ENCODE measurements at regions of chr6 and their contacts with region 1.

Region 1: GRCh38 chr6:168035098-168035660 is 37.7 kb downstream of the KIF25 start:
- DNase-seq: peak; percentile 72 to 85 (median 83)
- ATAC-seq: peak; percentile 48 to 74 (median 69)
- H3K4me3 ChIP-seq: peak overlapping the region in 11 of 12 donors; percentile 9 to 62 (median 48)
- H3K27ac ChIP-seq: peak overlapping the region; percentile 58 to 97 (median 86)
- H3K4me1 ChIP-seq: peaks cover 5 to 71% (median 52%) of the 10 kb centered on the region in 12 donors
- H3K27me3 ChIP-seq: peaks cover 0 to 8% (median 0%) of the 10 kb centered on the region in 9 donors
- CTCF ChIP-seq: no peak
- POLR2A ChIP-seq: no peak

Region 2: GRCh38 chr6:167932468-167933276 is 102.5 kb before region 1 on chr6:
- intact Hi-C with region 1: loop called in 5 of 10 experiments (anchors 2 to 10 kb)
- DNase-seq: no peak
- ATAC-seq: no peak
- H3K4me3 ChIP-seq: no peak overlapping the region
- H3K27ac ChIP-seq: peak overlapping the region in 8 of 12 donors; percentile 61 to 82 (median 78)
- H3K4me1 ChIP-seq: peaks cover 0 to 27% (median 15%) of the 10 kb centered on the region in 12 donors
- H3K27me3 ChIP-seq: no peaks in the 10 kb centered on the region
- CTCF ChIP-seq: no peak
- POLR2A ChIP-seq: no peak

Region 3: GRCh38 chr6:167968091-167968490 is 67.1 kb before region 1 on chr6:
- intact Hi-C with region 1: loop called in 2 of 10 experiments (anchors 2 to 5 kb)
- DNase-seq: no peak
- ATAC-seq: no peak
- H3K4me3 ChIP-seq: no peak overlapping the region
- H3K27ac ChIP-seq: peak overlapping the region in 3 of 12 donors; percentile 74 to 82 (median 80)
- H3K4me1 ChIP-seq: peaks cover 0 to 39% (median 7%) of the 10 kb centered on the region in 12 donors
- H3K27me3 ChIP-seq: no peaks in the 10 kb centered on the region
- CTCF ChIP-seq: peak in 10 of 12 donors; percentile 12 to 50 (median 35)
- POLR2A ChIP-seq: no peak

Region 4: DNA sequence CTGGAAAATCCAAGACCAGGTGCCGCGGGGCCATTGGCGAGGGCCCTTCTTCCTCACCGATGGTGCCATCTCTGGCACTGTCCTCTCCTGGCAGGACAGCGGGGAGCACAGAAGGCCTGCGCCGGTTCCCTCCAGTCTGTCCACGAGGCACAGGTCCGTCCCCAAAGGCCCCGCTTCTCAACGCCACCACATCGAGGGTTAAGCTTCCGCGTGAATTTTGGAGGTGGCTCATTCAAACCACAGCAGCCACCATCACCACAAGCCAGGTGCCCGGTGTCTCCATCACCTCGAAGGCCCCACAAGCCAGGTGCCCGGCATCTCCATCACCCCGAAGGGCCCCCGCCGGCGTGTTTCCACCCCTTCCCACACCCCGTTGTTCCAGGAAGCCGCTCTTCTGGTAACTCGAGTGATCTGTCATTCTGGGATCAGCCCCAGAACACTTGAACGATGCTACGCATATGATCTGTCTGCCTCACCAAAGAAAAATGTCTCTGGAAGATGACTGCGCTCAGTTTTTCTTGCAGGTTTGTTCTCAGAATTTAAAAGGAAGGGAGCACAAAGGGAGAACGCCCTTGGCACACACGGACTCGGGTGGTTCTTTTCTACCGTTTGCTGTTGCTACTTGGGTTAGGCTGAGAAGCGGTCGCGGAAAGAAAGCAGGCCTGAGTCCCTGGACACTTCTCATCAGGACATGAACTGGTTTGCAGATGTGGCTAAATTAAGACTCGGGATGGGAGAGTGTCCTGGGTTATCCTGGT is 47.6 kb before region 1 on chr6:
- intact Hi-C with region 1: loop called in 4 of 10 experiments (anchors 1 to 5 kb)
- DNase-seq: no peak
- ATAC-seq: peak in 2 of 4 donors; percentile 28 to 30
- H3K4me3 ChIP-seq: no peak overlapping the region
- H3K27ac ChIP-seq: peak overlapping the region in 11 of 12 donors; percentile 38 to 81 (median 62)
- H3K4me1 ChIP-seq: peaks cover 0 to 22% (median 0%) of the 10 kb centered on the region in 12 donors
- H3K27me3 ChIP-seq: no peaks in the 10 kb centered on the region
- CTCF ChIP-seq: no peak
- POLR2A ChIP-seq: no peak

Region 5: GRCh38 chr6:167993169-167993568 is 42.0 kb before region 1 on chr6:
- intact Hi-C with region 1: loop called in 6 of 10 experiments (anchors 1 to 5 kb)
- DNase-seq: peak; percentile 75 to 80 (median 79)
- ATAC-seq: peak; percentile 75 to 97 (median 84)
- H3K4me3 ChIP-seq: no peak overlapping the region
- H3K27ac ChIP-seq: peak overlapping the region in 10 of 12 donors; percentile 46 to 86 (median 72)
- H3K4me1 ChIP-seq: peaks cover 0 to 23% (median 5%) of the 10 kb centered on the region in 12 donors
- H3K27me3 ChIP-seq: peaks cover 0 to 6% (median 0%) of the 10 kb centered on the region in 9 donors
- CTCF ChIP-seq: no peak
- POLR2A ChIP-seq: no peak

Measured in heart left ventricle (tissue), 16 donors.